ENCODE measurements at regions of chr6 and their contacts with region 1.

Region 1: DNA sequence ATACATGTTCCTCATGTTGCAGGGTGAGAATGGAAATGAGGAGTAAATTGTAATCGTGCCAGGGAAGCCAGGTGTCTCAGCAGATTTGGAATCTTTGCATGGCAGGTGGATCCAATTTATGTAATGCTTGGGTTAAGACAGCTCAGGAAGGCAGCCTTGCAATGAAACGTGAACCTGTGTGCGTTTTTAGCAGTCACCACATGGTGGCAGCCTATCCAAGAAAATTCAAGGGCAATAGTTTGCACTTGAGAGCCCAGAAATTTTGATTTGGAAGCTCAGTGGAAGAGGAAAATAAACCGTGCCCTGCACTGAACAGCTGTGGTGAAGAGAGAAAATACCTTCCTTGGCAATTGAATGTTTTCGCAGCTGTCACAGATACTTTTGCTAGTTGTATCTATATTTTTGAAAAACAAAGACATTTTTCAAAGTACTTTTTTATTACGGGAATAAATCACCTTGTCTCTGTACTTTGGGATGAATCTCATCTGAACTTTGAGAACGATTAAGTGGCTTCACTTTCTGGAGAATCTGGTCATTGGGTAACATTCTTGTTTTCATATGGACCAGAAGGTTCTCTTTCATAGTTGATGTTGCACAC is 26.5 kb downstream of the MTHFD1L start:
- DNase-seq: peak; percentile 69
- H3K4me3 Mint-ChIP-seq: no peak overlapping the region
- H3K27ac Mint-ChIP-seq: no peak overlapping the region
- H3K4me1 Mint-ChIP-seq: peaks cover 29% of the 10 kb centered on the region
- H3K27me3 Mint-ChIP-seq: no peaks in the 10 kb centered on the region

Region 2: DNA sequence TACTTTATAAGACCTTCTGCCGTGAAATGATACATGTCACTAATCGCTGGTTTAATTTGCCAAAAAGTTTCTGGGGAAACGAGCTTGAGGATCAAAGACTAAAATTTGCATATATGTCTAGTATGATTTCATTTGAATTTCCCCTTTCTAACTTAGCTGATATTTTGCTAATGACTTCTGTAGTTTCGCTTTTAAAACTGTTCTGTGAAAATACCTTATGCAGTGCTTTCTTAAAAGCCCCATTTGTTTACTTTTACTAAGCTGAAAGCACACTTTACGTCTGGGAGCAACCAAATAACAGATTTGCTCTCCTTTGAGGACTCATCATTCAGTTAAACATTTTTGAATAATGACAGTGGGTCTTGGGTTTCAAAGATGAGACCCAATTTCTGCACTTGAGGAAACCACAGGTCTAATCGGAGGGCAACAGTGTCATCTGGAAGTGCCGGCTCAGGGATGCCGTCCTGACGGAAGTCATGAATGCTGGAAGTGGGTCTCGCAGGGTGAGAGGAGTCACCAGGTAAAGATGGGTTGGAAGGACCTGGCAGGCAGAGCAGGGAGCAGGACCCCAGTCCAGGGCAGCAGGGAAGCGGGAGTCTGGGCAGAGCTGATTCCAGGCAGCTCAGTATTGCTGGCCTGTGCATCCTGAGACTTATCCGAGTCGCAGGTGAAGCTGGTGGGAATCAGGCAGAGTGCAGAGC is 259.1 kb before region 1 on chr6:
- CTCF ChIA-PET with region 1: no interaction called
- POLR2A ChIA-PET with region 1: no interaction called
- intact Hi-C with region 1: no loop called
- DNase-seq: peak; percentile 17
- H3K4me3 Mint-ChIP-seq: peak overlapping the region; percentile 71
- H3K27ac Mint-ChIP-seq: peak overlapping the region; percentile 68
- H3K4me1 Mint-ChIP-seq: peaks cover 45% of the 10 kb centered on the region
- H3K27me3 Mint-ChIP-seq: peaks cover 12% of the 10 kb centered on the region

Region 3: DNA sequence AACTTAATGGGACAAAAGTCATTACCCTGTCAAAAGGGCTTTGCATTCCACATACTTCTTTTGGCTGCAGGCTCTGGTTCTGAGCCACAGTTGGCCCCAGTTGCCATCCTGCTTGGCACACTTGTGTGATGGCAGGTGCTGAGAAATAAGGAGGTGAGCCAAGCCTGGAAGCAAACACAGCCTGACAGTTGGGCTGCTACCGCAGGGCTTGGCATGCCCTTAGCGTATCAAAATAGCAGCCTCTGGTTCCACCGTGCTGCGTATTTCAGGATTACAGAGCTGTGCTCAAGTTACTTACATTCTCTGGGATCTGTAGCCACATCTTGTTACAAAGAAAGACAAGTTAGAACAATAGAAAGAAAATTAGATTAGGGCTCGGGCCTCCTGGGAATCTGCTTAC is 15.4 kb before region 1 on chr6:
- CTCF ChIA-PET with region 1: interaction called, 24 read pairs
- POLR2A ChIA-PET with region 1: interaction called, 4 read pairs
- intact Hi-C with region 1: no loop called
- DNase-seq: no peak
- H3K4me3 Mint-ChIP-seq: no peak overlapping the region
- H3K27ac Mint-ChIP-seq: no peak overlapping the region
- H3K4me1 Mint-ChIP-seq: no peaks in the 10 kb centered on the region
- H3K27me3 Mint-ChIP-seq: no peaks in the 10 kb centered on the region

Region 4: GRCh38 chr6:150928882-150929281 is 36.9 kb after region 1 on chr6:
- CTCF ChIA-PET with region 1: interaction called, 16 read pairs
- POLR2A ChIA-PET with region 1: no interaction called
- intact Hi-C with region 1: no loop called
- DNase-seq: no peak
- H3K4me3 Mint-ChIP-seq: no peak overlapping the region
- H3K27ac Mint-ChIP-seq: no peak overlapping the region
- H3K4me1 Mint-ChIP-seq: no peaks in the 10 kb centered on the region
- H3K27me3 Mint-ChIP-seq: no peaks in the 10 kb centered on the region

Region 5: GRCh38 chr6:151330134-151330696 is 438.2 kb after region 1 on chr6:
- CTCF ChIA-PET with region 1: interaction called, 98 read pairs
- POLR2A ChIA-PET with region 1: no interaction called
- intact Hi-C with region 1: loop called (anchors 2 kb)
- DNase-seq: no peak
- H3K4me3 Mint-ChIP-seq: no peak overlapping the region
- H3K27ac Mint-ChIP-seq: no peak overlapping the region
- H3K4me1 Mint-ChIP-seq: peaks cover 9% of the 10 kb centered on the region
- H3K27me3 Mint-ChIP-seq: peaks cover 32% of the 10 kb centered on the region

Measured in activated CD4-positive, alpha-beta memory T cell treated with anti-CD3 and anti-CD28 coated beads for 36 hours (primary cell).